ENCODE measurements at regions of chr15 and their contacts with region 1.

Region 1: DNA sequence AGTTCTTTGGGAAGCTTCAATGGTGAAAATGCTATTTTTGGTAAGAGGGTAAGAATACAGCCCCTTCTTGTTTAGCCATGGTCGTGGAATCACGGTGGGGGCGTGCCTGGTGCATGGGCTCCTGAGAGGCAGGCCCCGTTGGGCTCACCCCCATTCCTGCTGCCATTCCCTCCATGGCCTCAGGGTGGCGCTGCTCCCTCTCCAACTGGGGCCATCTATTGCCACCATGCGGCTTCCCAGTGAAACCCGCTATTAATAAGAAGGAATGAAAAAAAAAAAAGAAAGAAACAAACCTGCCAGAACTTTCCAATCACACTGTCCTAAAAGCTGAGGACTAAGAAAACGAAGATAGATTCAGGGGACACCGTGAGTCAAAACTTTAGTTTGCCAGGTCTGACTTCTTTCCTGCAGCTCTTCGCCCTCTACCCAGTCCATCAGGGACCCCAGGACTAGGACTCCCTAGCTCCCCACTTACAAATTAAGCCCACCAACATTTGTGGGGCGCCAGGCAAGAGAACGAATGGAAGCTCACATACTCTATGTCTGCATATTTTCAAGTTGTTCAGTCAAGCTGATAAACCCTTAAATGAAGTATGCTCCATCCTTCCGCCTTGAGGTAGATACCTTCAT is 30.6 kb upstream of the ABHD2 start:
- DNase-seq: peak; percentile 82
- ATAC-seq: peak; percentile 89
- H3K4me3 Mint-ChIP-seq: no peak overlapping the region
- H3K27ac Mint-ChIP-seq: no peak overlapping the region
- H3K4me1 Mint-ChIP-seq: peaks cover 4% of the 10 kb centered on the region
- H3K27me3 Mint-ChIP-seq: peaks cover 4% of the 10 kb centered on the region

Region 2: DNA sequence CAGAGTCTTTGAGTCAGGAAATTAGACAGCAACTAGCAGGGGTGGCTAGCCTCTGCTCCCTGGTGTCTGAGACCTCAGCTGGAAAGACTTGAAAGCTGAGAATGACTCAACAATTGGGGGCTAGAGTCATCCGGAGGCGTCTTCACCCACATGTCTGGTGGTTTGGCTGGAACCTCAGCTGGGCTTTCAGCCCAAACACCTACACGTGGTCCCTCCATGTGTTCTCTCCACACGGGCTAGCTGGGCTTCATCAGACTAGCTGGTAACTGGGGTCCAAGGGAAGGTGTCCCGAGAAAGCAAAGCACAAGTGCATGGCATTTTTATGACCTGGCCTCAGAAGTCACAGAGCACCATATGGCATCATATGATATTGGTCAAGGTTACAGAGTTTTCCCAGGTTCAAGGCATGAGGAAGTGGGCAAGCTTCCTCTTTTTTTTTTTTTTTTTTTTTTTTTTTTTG is 10.7 kb after region 1 on chr15:
- CTCF ChIA-PET with region 1: interaction called, 15 read pairs
- POLR2A ChIA-PET with region 1: no interaction called
- DNase-seq: peak; percentile 58
- ATAC-seq: peak; percentile 85
- H3K4me3 Mint-ChIP-seq: peak overlapping the region; percentile 8
- H3K27ac Mint-ChIP-seq: peak overlapping the region; percentile 64
- H3K4me1 Mint-ChIP-seq: peaks cover 14% of the 10 kb centered on the region
- H3K27me3 Mint-ChIP-seq: peaks cover 3% of the 10 kb centered on the region

Region 3: DNA sequence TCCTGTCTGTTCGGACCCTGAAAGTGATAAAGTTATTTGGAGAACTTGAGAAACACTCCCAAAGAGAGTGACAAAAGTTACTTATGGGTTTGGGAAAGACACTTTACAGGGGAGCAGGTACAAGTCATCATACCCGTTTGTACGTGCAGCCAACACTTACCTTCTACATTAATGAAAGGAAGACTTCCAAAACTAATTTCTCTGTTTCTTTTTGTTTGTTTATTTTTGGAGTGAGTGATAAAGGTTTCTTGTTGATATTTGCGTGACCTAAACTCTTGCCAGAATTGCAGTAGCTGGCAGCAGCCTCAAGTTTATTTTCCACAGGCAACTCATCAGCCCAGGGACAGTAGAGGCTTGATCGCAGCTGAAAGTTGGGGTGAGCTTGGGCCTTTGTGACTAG is 39.0 kb after region 1 on chr15:
- CTCF ChIA-PET with region 1: interaction called, 47 read pairs
- POLR2A ChIA-PET with region 1: no interaction called
- DNase-seq: no peak
- ATAC-seq: no peak
- H3K4me3 Mint-ChIP-seq: no peak overlapping the region
- H3K27ac Mint-ChIP-seq: no peak overlapping the region
- H3K4me1 Mint-ChIP-seq: peaks cover 19% of the 10 kb centered on the region
- H3K27me3 Mint-ChIP-seq: no peaks in the 10 kb centered on the region

Region 4: GRCh38 chr15:89119489-89120123 is 62.0 kb after region 1 on chr15:
- CTCF ChIA-PET with region 1: interaction called, 88 read pairs
- POLR2A ChIA-PET with region 1: no interaction called
- DNase-seq: no peak
- ATAC-seq: no peak
- H3K4me3 Mint-ChIP-seq: no peak overlapping the region
- H3K27ac Mint-ChIP-seq: no peak overlapping the region
- H3K4me1 Mint-ChIP-seq: no peaks in the 10 kb centered on the region
- H3K27me3 Mint-ChIP-seq: no peaks in the 10 kb centered on the region

Region 5: GRCh38 chr15:89150762-89151664 is 93.4 kb after region 1 on chr15:
- CTCF ChIA-PET with region 1: interaction called, 11 read pairs
- POLR2A ChIA-PET with region 1: no interaction called
- DNase-seq: no peak
- ATAC-seq: no peak
- H3K4me3 Mint-ChIP-seq: no peak overlapping the region
- H3K27ac Mint-ChIP-seq: no peak overlapping the region
- H3K4me1 Mint-ChIP-seq: peaks cover 9% of the 10 kb centered on the region
- H3K27me3 Mint-ChIP-seq: no peaks in the 10 kb centered on the region

Region 6: DNA sequence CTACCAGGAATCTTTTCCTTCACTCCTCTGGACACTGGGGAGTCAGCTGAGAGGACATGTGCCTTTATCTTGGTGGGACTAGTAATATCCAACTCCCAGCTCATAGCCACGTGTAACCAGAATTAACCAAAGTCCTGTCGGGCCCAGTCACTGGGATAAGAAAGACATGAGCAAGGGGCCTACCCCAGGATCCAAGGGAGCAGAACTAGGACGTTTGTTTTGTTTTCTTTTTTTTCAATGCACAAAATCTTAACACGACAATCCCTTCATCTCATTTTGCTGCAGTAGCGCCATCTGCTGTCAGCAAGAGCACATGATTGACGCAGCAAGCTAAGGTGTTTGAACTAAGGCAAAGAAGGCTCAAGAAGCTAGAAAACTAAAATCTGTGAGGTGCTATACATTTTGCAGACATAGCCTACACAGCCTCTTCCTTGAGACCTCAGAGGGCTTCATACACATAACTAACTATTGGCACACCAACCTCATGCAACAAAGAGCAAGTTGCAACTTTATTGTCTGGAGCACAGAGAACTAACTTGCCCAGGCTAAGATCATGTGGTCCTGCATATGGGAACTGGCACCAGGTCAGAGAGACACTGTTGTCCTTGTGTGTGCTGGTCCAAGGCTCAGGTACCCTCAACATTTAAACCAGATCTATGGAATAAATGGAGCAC is 120.2 kb after region 1 on chr15:
- CTCF ChIA-PET with region 1: interaction called, 88 read pairs
- POLR2A ChIA-PET with region 1: no interaction called
- DNase-seq: peak; percentile 83
- ATAC-seq: peak; percentile 49
- H3K4me3 Mint-ChIP-seq: no peak overlapping the region
- H3K27ac Mint-ChIP-seq: no peak overlapping the region
- H3K4me1 Mint-ChIP-seq: peaks cover 6% of the 10 kb centered on the region
- H3K27me3 Mint-ChIP-seq: no peaks in the 10 kb centered on the region

Measured in activated CD8-positive, alpha-beta T cell treated with anti-CD3 and anti-CD28 coated beads, Interleukin-2, amount 10 ng/mL, durations not matched to agents 7 days and 5 days (primary cell).